Thyroid gland (tissue), 4 donors: ENCODE measurements at regions of chr9 and their contacts with region 1.

Region 1: GRCh38 chr9:129489838-129490582 is 130.9 kb downstream of the C9orf50 start:
- DNase-seq: peak; percentile 35 to 41
- H3K4me3 ChIP-seq: peak overlapping the region in 1 of 3 donors; percentile 46
- H3K27ac ChIP-seq: peak overlapping the region; percentile 100
- H3K4me1 ChIP-seq: peaks cover 57 to 83% of the 10 kb centered on the region in 2 donors
- H3K27me3 ChIP-seq: no peaks in the 10 kb centered on the region
- CTCF ChIP-seq: no peak
- POLR2A ChIP-seq: no peak

Region 2: GRCh38 chr9:129336601-129337331 is 153.2 kb before region 1 on chr9:
- intact Hi-C with region 1: loop called (anchors 5 kb)
- DNase-seq: peak; percentile 33 to 44
- H3K4me3 ChIP-seq: peak overlapping the region in 1 of 3 donors; percentile 21
- H3K27ac ChIP-seq: peak overlapping the region in 2 of 3 donors; percentile 72 to 94
- H3K4me1 ChIP-seq: peaks cover 33 to 61% of the 10 kb centered on the region in 2 donors
- H3K27me3 ChIP-seq: no peaks in the 10 kb centered on the region
- CTCF ChIP-seq: no peak
- POLR2A ChIP-seq: no peak

Region 3: GRCh38 chr9:129524582-129525270 is 34.7 kb after region 1 on chr9:
- intact Hi-C with region 1: no loop called
- DNase-seq: peak; percentile 40 to 50
- H3K4me3 ChIP-seq: no peak overlapping the region
- H3K27ac ChIP-seq: no peak overlapping the region
- H3K4me1 ChIP-seq: peaks cover 0 to 5% of the 10 kb centered on the region in 2 donors
- H3K27me3 ChIP-seq: no peaks in the 10 kb centered on the region
- CTCF ChIP-seq: no peak
- POLR2A ChIP-seq: no peak

Region 4: GRCh38 chr9:129604772-129605171 is 114.8 kb after region 1 on chr9:
- intact Hi-C with region 1: loop called (anchors 2 kb)
- DNase-seq: no peak
- H3K4me3 ChIP-seq: no peak overlapping the region
- H3K27ac ChIP-seq: no peak overlapping the region
- H3K4me1 ChIP-seq: peaks cover 2 to 28% of the 10 kb centered on the region in 2 donors
- H3K27me3 ChIP-seq: no peaks in the 10 kb centered on the region
- CTCF ChIP-seq: no peak
- POLR2A ChIP-seq: no peak